ENCODE measurements at regions of chr9 and their contacts with region 1.

Region 1: DNA sequence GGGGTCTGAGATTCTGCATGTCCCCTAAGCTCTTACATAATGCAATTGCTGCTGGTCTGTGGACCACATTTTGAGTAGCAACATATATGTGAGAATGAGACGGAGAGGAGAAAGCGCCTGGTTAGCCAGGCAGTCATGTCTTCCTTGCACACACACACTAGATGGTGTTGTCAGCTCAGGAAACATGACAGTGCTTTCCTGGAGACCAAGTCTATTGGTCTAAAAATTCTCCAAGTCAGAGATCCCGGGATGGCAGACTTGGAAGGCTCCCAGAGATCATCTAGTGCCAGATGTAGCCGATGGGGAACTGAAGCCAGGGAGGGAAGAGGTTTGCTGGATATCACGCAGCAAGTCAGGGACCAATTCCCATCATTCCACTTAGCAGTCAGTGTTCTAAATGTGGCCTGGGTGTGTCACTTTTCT is 53.4 kb downstream of the GALNT12 start:
- H3K4me3 ChIP-seq: no peak overlapping the region
- H3K27ac ChIP-seq: no peak overlapping the region
- H3K4me1 ChIP-seq: no peaks in the 10 kb centered on the region
- CTCF ChIP-seq: peak; percentile 49; the same call in 1 of the 2 replicates

Region 2: DNA sequence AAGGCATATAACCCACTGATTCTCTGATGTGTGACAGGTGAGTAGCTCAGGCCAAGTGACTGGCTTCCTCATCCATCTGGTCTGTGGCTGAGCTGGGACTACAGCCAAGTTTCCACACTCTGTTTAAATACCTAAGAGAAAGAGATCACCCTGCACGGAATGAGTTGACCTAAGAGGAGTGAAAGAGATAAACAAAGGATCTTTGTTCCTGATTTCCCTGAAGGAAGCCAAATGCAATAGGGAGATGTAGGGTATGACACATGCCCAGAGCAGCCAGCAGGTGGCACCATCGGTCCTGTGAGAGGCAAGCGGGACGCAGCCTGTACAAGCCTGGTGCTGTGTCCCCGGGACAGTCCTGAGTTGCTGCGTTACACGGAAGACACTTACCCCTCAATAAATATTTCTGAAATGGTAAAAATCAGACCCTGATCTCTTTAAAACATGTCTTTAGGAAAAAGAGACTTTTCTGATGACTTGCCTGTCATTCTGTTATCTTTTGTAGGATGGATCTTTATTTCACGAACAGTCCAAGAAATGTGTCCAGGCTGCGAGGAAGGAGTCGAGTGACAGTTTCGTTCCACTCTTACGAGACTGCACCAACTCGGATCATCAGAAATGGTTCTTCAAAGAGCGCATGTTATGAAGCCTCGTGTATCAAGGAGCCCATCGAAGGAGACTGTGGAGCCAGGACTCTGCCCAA is 12.3 kb before region 1 on chr9:
- CTCF ChIA-PET with region 1: interaction called, 21 read pairs
- POLR2A ChIA-PET with region 1: interaction called, 4 read pairs
- H3K4me3 ChIP-seq: no peak overlapping the region
- H3K27ac ChIP-seq: no peak overlapping the region
- H3K4me1 ChIP-seq: no peaks in the 10 kb centered on the region
- CTCF ChIP-seq: peak; percentile 69; the same call in 1 of the 2 replicates

Region 3: GRCh38 chr9:98899408-98900056 is 38.6 kb after region 1 on chr9:
- CTCF ChIA-PET with region 1: no interaction called
- POLR2A ChIA-PET with region 1: no interaction called
- H3K4me3 ChIP-seq: no peak overlapping the region
- H3K27ac ChIP-seq: no peak overlapping the region
- H3K4me1 ChIP-seq: no peaks in the 10 kb centered on the region
- CTCF ChIP-seq: no peak

Region 4: GRCh38 chr9:99012942-99013512 is 152.1 kb after region 1 on chr9:
- CTCF ChIA-PET with region 1: interaction called, 11 read pairs
- POLR2A ChIA-PET with region 1: no interaction called
- H3K4me3 ChIP-seq: no peak overlapping the region
- H3K27ac ChIP-seq: no peak overlapping the region
- H3K4me1 ChIP-seq: no peaks in the 10 kb centered on the region
- CTCF ChIP-seq: no peak